CD4-positive, alpha-beta T cell (primary cell): ENCODE measurements at regions of chr16 and their contacts with region 1.

Region 1: GRCh38 chr16:3400779-3401688 is at the starts of genes ZNF174 and ZSCAN32:
- DNase-seq: peak; percentile 96 to 99 (median 98)
- ATAC-seq: peak; percentile 97
- H3K4me3 ChIP-seq: peak within 1 kb of the TSS; percentile 83
- H3K4me3 Mint-ChIP-seq: peak within 1 kb of the TSS; percentile 95
- H3K27ac ChIP-seq: peak within 1 kb of the TSS; percentile 71 to 73
- H3K27ac Mint-ChIP-seq: peak within 1 kb of the TSS; percentile 88
- H3K4me1 ChIP-seq: peaks cover 49% of the 10 kb centered on the region
- H3K4me1 Mint-ChIP-seq: peaks cover 67% of the 10 kb centered on the region
- H3K27me3 ChIP-seq: no peaks in the 10 kb centered on the region
- H3K27me3 Mint-ChIP-seq: no peaks in the 10 kb centered on the region
- CTCF ChIP-seq: no peak
- total RNA-seq, gene ZNF174: 5.6 to 5.7 TPM
- total RNA-seq, gene ZSCAN32: 4.8 to 5.4 TPM

Region 2: DNA sequence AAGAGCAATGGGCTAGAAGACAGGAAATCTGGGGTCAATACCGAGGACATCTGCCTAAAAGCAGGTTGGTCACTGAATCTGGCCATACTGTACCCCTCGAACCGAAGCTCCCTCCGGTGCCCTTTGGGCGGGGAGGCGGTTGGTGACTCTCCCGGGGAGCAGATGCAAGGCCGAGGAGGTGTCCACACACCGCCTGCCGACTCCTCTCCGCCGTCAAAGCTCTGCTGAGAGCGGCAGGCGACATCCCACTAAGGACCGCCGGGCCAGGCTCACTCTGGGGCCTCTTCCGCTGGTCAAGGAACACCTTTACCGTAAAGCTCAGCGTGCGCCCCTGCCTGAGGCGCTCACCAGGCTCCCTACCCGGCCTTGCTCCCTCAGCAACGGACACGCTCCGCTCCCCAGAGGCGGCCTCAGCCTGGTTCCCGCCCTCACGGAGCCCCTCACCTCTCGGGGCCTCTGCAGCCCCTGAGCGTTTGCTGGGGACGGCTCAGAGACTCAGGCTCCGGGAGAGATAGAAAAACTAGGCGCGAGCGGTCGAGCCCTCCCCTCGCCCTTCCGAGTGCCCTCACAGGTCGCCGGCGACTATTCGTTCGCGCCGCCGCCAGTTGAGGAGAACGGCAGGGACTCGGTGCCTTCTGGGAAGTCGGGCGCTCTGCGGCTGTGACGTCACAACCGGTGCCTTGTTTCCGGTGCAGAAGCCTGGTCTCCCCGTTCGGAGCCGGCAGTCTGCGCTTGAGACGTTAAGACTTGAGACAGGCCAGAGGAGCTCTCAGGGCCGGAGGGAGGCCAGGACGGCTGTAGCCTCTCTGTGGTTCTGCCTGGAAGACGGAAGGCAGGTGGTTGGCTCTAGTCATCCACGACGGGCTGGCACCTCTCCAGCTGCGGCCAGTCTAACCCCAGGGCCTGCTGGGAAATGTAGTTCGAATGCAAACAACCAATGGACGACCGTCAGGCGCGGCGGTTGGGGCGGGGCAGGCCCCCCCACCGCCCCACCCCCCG is 166.2 kb before region 1 on chr16 and contains the start of gene ZNF200:
- CTCF ChIA-PET with region 1: interaction called, 3 read pairs
- POLR2A ChIA-PET with region 1: interaction called, 16 read pairs
- intact Hi-C with region 1: no loop called
- DNase-seq: peak; percentile 86 to 97 (median 90)
- ATAC-seq: peak; percentile 89
- H3K4me3 ChIP-seq: peak within 1 kb of the TSS; percentile 98
- H3K4me3 Mint-ChIP-seq: peak within 1 kb of the TSS; percentile 94
- H3K27ac ChIP-seq: peak within 1 kb of the TSS; percentile 88 to 97
- H3K27ac Mint-ChIP-seq: peak within 1 kb of the TSS; percentile 94
- H3K4me1 ChIP-seq: peaks cover 27% of the 10 kb centered on the region
- H3K4me1 Mint-ChIP-seq: peaks cover 50% of the 10 kb centered on the region
- H3K27me3 ChIP-seq: no peaks in the 10 kb centered on the region
- H3K27me3 Mint-ChIP-seq: no peaks in the 10 kb centered on the region
- CTCF ChIP-seq: no peak
- total RNA-seq, gene ZNF200: 7.0 to 7.2 TPM

Region 3: DNA sequence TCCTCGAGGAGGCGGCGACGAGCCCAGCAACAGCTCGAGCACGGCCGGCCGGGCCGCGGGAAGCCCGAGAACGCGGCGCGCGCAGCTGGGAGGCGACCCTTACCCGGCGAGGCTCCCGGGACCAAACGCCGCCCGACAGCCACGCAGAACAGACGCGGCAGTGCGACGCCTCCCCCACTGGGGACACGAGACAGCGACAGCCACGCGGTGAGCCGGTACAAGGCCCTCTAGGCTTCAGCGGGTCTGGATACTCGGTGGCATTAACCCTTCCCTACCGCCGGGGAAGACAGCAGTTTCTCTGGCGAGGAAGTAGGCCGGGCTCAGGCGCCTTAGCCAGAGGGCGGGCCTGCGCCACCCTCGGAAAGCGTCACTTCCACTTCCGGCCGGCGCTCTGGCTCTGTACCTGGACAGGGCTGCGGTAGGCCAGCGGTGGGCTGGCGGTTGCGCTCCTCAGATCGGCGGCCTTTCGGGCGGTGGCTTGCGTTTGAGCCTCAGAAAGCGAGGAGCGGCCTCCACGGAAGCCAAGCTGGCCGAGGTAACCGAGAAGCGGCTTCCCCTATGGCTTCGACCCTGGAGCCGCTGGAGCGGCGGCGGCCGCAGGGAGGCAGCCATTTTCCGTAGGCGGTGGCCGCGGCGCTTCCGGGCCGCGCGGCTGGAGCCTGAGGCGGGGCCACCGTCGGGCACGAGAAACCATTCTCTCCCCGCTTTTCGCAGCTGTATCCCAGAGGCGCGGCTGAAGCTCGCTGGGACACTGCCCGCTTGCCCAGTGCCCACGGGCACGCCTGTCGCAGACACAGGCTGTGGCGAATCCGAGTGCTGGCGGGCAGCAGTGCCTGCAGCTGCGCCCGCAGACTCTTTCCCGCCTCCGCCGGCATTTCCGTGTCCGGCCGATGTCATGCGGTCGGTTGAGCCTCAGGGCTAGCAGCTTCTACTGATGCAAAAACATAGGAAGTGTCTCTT is 95.6 kb before region 1 on chr16 and contains the starts of genes TIGD7 and ZNF75A:
- CTCF ChIA-PET with region 1: interaction called, 5 read pairs
- POLR2A ChIA-PET with region 1: interaction called, 12 read pairs
- intact Hi-C with region 1: loop called in 1 of 2 experiments (anchors 2 kb)
- DNase-seq: peak; percentile 67 to 96 (median 79)
- ATAC-seq: peak; percentile 92
- H3K4me3 ChIP-seq: peak within 1 kb of the TSS; percentile 91
- H3K4me3 Mint-ChIP-seq: peak within 1 kb of the TSS; percentile 86
- H3K27ac ChIP-seq: peak within 1 kb of the TSS; percentile 76 to 89
- H3K27ac Mint-ChIP-seq: peak within 1 kb of the TSS; percentile 82
- H3K4me1 ChIP-seq: peaks cover 28% of the 10 kb centered on the region
- H3K4me1 Mint-ChIP-seq: peaks cover 22% of the 10 kb centered on the region
- H3K27me3 ChIP-seq: no peaks in the 10 kb centered on the region
- H3K27me3 Mint-ChIP-seq: no peaks in the 10 kb centered on the region
- CTCF ChIP-seq: no peak
- total RNA-seq, gene TIGD7: 1.5 to 1.7 TPM
- total RNA-seq, gene ZNF75A: 41.7 to 42.2 TPM

Region 4: DNA sequence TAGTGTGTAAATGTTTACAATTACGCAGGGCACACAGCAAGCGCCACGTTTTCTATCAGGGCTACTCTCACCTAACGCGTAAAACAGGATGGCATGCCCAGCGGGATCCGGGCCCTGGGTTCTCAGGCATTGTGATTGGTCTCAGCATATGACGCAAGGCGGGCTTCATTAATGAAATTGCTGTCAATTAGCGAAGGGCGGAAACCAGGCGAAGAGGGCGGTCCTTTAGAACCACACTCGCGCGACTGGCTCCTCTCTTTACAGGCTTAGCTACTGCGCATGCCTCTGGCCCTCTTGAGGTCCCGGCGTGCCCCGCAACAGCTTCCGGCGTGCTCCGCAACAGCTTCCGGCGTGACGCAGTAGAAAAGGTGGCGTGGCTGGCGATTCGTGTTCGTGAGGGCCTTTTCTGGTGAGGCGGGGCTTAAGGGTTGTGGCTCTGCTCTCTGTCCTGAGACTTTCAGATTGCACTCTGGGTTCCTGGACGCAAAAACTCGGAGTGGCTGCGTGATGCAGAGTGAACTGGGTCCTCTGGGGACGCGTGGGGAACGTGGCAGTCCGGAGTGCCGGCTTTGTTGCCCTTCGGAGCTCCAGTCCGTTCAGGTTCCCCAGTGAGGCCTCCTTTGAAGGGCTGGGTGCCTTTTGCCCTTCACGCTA is 36.1 kb before region 1 on chr16:
- CTCF ChIA-PET with region 1: interaction called, 5 read pairs
- POLR2A ChIA-PET with region 1: interaction called, 41 read pairs
- intact Hi-C with region 1: loop called (anchors 1 to 2 kb)
- DNase-seq: peak; percentile 70 to 97 (median 80)
- ATAC-seq: peak; percentile 94
- H3K4me3 ChIP-seq: peak overlapping the region; percentile 56
- H3K4me3 Mint-ChIP-seq: peak overlapping the region; percentile 92
- H3K27ac ChIP-seq: peak overlapping the region; percentile 38 to 82
- H3K27ac Mint-ChIP-seq: peak overlapping the region; percentile 89
- H3K4me1 ChIP-seq: peaks cover 17% of the 10 kb centered on the region
- H3K4me1 Mint-ChIP-seq: peaks cover 6% of the 10 kb centered on the region
- H3K27me3 ChIP-seq: peaks cover 10 to 11% of the 10 kb centered on the region in 2 experiments
- H3K27me3 Mint-ChIP-seq: peaks cover 30% of the 10 kb centered on the region
- CTCF ChIP-seq: no peak

Region 5: GRCh38 chr16:3443108-3444031 is 42.3 kb after region 1 on chr16 and contains the starts of genes NAA60 and ZNF597:
- CTCF ChIA-PET with region 1: no interaction called
- POLR2A ChIA-PET with region 1: interaction called, 26 read pairs
- intact Hi-C with region 1: loop called in 1 of 2 experiments (anchors 1 kb)
- DNase-seq: peak; percentile 50 to 92 (median 72)
- ATAC-seq: peak; percentile 90
- H3K4me3 ChIP-seq: peak within 1 kb of the TSS; percentile 71
- H3K4me3 Mint-ChIP-seq: peak within 1 kb of the TSS; percentile 98
- H3K27ac ChIP-seq: peak within 1 kb of the TSS; percentile 70 to 79
- H3K27ac Mint-ChIP-seq: peak within 1 kb of the TSS; percentile 95
- H3K4me1 ChIP-seq: peaks cover 25% of the 10 kb centered on the region
- H3K4me1 Mint-ChIP-seq: peaks cover 24% of the 10 kb centered on the region
- H3K27me3 ChIP-seq: no peaks in the 10 kb centered on the region
- H3K27me3 Mint-ChIP-seq: no peaks in the 10 kb centered on the region
- CTCF ChIP-seq: no peak
- total RNA-seq, gene NAA60: 27.2 to 27.8 TPM
- total RNA-seq, gene ZNF597: 2.3 to 2.5 TPM

Region 6: DNA sequence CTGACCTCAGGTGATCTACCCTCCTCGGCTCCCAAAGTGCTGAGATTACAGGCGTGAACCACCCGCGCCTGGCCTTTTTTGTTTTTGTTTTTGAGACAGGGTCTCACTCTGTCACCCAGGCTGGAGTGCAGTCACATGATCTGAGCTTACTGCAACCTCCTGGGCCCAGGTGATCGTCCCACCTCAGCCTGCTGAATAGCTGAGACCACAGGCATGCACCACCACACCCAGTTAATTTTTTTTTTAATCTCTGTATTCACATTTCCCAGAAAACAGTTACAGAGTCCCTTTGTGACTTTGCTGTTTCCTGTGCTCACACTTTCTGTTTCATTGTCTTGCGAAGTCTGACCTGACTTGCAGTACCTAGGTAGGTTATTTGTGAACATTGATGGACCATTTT is 102.5 kb after region 1 on chr16:
- CTCF ChIA-PET with region 1: no interaction called
- POLR2A ChIA-PET with region 1: interaction called, 11 read pairs
- intact Hi-C with region 1: loop called in 1 of 2 experiments (anchors 1 kb)
- DNase-seq: peak; percentile 23 to 89 (median 62)
- ATAC-seq: peak; percentile 55
- H3K4me3 ChIP-seq: peak overlapping the region; percentile 25
- H3K4me3 Mint-ChIP-seq: peak overlapping the region; percentile 83
- H3K27ac ChIP-seq: peak overlapping the region; percentile 42 to 66
- H3K27ac Mint-ChIP-seq: peak overlapping the region; percentile 95
- H3K4me1 ChIP-seq: peaks cover 60% of the 10 kb centered on the region
- H3K4me1 Mint-ChIP-seq: peaks cover 72% of the 10 kb centered on the region
- H3K27me3 ChIP-seq: no peaks in the 10 kb centered on the region
- H3K27me3 Mint-ChIP-seq: no peaks in the 10 kb centered on the region
- CTCF ChIP-seq: no peak